PC-9 (cell line): ENCODE measurements at regions of chr10 and their contacts with region 1.

Region 1: GRCh38 chr10:74669210-74669609 is 157.2 kb upstream of the KAT6B start:
- DNase-seq: no peak
- H3K4me3 ChIP-seq: no peak overlapping the region
- H3K27ac ChIP-seq: no peak overlapping the region
- H3K4me1 ChIP-seq: no peaks in the 10 kb centered on the region
- H3K27me3 ChIP-seq: no peaks in the 10 kb centered on the region
- CTCF ChIP-seq: no peak

Region 2: GRCh38 chr10:74589226-74589673 is 80.0 kb before region 1 on chr10:
- CTCF ChIA-PET with region 1: no interaction called
- POLR2A ChIA-PET with region 1: interaction called, 12 read pairs
- intact Hi-C with region 1: no loop called
- DNase-seq: no peak
- H3K4me3 ChIP-seq: no peak overlapping the region
- H3K27ac ChIP-seq: no peak overlapping the region
- H3K4me1 ChIP-seq: no peaks in the 10 kb centered on the region
- H3K27me3 ChIP-seq: no peaks in the 10 kb centered on the region
- CTCF ChIP-seq: no peak

Region 3: DNA sequence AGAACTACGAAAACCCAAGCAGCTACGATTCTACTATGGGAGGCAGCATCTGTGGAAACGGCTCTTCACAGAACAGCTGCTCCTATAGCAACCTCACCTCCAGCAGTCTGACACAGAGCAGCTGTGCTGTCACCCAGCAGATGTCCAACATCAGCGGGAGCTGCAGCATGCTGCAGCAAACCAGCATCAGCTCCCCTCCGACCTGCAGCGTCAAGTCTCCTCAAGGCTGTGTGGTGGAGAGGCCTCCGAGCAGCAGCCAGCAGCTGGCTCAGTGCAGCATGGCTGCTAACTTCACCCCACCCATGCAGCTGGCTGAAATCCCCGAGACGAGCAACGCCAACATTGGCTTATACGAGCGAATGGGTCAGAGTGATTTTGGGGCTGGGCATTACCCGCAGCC is 360.6 kb after region 1 on chr10:
- CTCF ChIA-PET with region 1: interaction called, 13 read pairs
- POLR2A ChIA-PET with region 1: no interaction called
- intact Hi-C with region 1: no loop called
- DNase-seq: no peak
- H3K4me3 ChIP-seq: no peak overlapping the region
- H3K27ac ChIP-seq: no peak overlapping the region
- H3K4me1 ChIP-seq: no peaks in the 10 kb centered on the region
- H3K27me3 ChIP-seq: no peaks in the 10 kb centered on the region
- CTCF ChIP-seq: no peak